ENCODE measurements at regions of chr19 and their contacts with region 1.

Region 1: GRCh38 chr19:20423381-20424197 is 142.0 kb downstream of the ZNF737 start:
- DNase-seq: peak; percentile 59
- H3K4me3 Mint-ChIP-seq: peak overlapping the region; percentile 94
- H3K27ac Mint-ChIP-seq: peak overlapping the region; percentile 98
- H3K4me1 Mint-ChIP-seq: peaks cover 10% of the 10 kb centered on the region
- H3K27me3 Mint-ChIP-seq: no peaks in the 10 kb centered on the region

Region 2: GRCh38 chr19:20039203-20039723 is 384.3 kb before region 1 on chr19 and contains the start of gene ZNF682:
- CTCF ChIA-PET with region 1: no interaction called
- intact Hi-C with region 1: loop called (anchors 5 kb)
- DNase-seq: peak; percentile 98
- H3K4me3 Mint-ChIP-seq: peak within 1 kb of the TSS; percentile 94
- H3K27ac Mint-ChIP-seq: peak within 1 kb of the TSS; percentile 90
- H3K4me1 Mint-ChIP-seq: peaks cover 15% of the 10 kb centered on the region
- H3K27me3 Mint-ChIP-seq: no peaks in the 10 kb centered on the region
- total RNA-seq, gene ZNF682: 8.1 to 8.9 TPM

Region 3: GRCh38 chr19:20237761-20238623 is 185.6 kb before region 1 on chr19:
- CTCF ChIA-PET with region 1: interaction called, 3 read pairs
- intact Hi-C with region 1: loop called (anchors 2 kb)
- DNase-seq: peak; percentile 97
- H3K4me3 Mint-ChIP-seq: peak overlapping the region; percentile 100
- H3K27ac Mint-ChIP-seq: peak overlapping the region; percentile 93
- H3K4me1 Mint-ChIP-seq: peaks cover 12% of the 10 kb centered on the region
- H3K27me3 Mint-ChIP-seq: no peaks in the 10 kb centered on the region

Region 4: GRCh38 chr19:20315543-20315942 is 108.0 kb before region 1 on chr19:
- CTCF ChIA-PET with region 1: no interaction called
- intact Hi-C with region 1: no loop called
- DNase-seq: no peak
- H3K4me3 Mint-ChIP-seq: no peak overlapping the region
- H3K27ac Mint-ChIP-seq: no peak overlapping the region
- H3K4me1 Mint-ChIP-seq: no peaks in the 10 kb centered on the region
- H3K27me3 Mint-ChIP-seq: no peaks in the 10 kb centered on the region

Region 5: DNA sequence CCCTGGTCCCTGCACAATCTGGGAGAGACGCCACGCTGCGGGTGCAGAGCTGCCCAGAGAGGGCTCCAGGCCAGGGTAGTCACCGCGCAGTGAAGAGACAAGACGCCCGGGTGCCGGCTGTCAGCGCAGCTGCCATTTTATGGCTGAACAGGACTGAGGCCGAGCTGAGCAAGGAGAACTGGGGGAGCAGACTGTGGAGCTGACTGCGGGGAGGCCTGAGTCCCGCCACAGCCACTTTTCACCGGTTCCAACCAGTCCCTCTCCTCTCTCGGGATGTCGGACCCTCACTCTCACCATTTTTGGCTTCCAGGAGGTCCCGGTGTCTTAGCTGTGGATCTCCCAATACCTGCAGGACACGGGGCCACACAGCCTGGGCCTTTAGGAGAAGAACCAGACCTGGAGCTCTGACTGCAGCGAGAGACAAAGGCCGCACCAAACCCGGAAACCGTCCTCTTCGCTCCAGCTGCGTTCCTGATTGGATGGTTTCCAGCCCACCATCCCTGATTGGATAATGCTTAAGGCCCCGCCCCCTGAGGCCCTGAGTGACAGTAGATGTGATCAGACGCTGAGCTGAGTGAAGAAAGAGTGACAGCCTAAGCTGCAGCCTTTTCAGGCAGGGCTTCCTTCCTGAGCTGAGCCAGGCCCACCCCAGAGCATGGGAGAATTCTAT is 237.7 kb after region 1 on chr19 and contains the start of gene ZNF626:
- CTCF ChIA-PET with region 1: no interaction called
- intact Hi-C with region 1: loop called (anchors 1 kb)
- DNase-seq: peak; percentile 97
- H3K4me3 Mint-ChIP-seq: peak within 1 kb of the TSS; percentile 93
- H3K27ac Mint-ChIP-seq: peak within 1 kb of the TSS; percentile 91
- H3K4me1 Mint-ChIP-seq: peaks cover 20% of the 10 kb centered on the region
- H3K27me3 Mint-ChIP-seq: no peaks in the 10 kb centered on the region
- total RNA-seq, gene ZNF626: 8.2 to 9.8 TPM

Region 6: GRCh38 chr19:21020298-21021227 is 597.0 kb after region 1 on chr19 and contains the start of gene ZNF430:
- CTCF ChIA-PET with region 1: no interaction called
- intact Hi-C with region 1: loop called (anchors 10 kb)
- DNase-seq: peak; percentile 98
- H3K4me3 Mint-ChIP-seq: peak within 1 kb of the TSS; percentile 98
- H3K27ac Mint-ChIP-seq: peak within 1 kb of the TSS; percentile 98
- H3K4me1 Mint-ChIP-seq: peaks cover 42% of the 10 kb centered on the region
- H3K27me3 Mint-ChIP-seq: no peaks in the 10 kb centered on the region
- total RNA-seq, gene ZNF430: 18.2 to 19.5 TPM